A673 (cell line): ENCODE measurements at regions of chr7 and their contacts with region 1.

Region 1: DNA sequence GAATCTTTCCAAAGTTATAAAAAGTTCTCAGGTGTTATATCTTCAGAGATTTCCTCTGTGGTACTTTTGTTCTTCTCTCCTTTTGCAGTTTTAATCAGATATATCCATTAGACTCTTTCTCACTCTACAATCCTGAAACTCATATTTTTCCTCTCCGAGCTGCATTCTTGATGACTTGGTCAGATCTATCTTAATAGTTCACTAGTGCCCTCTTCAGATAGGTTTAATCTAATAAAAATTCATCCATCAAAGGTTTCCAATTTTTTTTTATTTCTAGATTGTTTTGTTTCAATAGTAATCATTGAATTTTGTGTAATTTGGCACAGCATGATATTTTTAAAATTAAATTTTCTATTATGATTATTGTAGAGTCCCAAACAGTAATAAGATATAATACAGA is 21.8 kb upstream of the DGKB start:
- DNase-seq: peak; percentile 14
- H3K4me3 ChIP-seq: no peak overlapping the region
- H3K27ac ChIP-seq: no peak overlapping the region
- H3K4me1 ChIP-seq: no peaks in the 10 kb centered on the region
- H3K27me3 ChIP-seq: peaks cover 4% of the 10 kb centered on the region
- CTCF ChIP-seq: no peak; the same call in 1 of the 2 replicates

Region 2: GRCh38 chr7:14734839-14735321 is 189.5 kb before region 1 on chr7:
- CTCF ChIA-PET with region 1: interaction called, 5 read pairs
- POLR2A ChIA-PET with region 1: no interaction called
- intact Hi-C with region 1: loop called (anchors 5 kb)
- DNase-seq: peak; percentile 62
- H3K4me3 ChIP-seq: no peak overlapping the region
- H3K27ac ChIP-seq: no peak overlapping the region
- H3K4me1 ChIP-seq: no peaks in the 10 kb centered on the region
- H3K27me3 ChIP-seq: no peaks in the 10 kb centered on the region
- CTCF ChIP-seq: peak; percentile 65

Region 3: GRCh38 chr7:15015545-15016326 is 91.3 kb after region 1 on chr7:
- CTCF ChIA-PET with region 1: interaction called, 6 read pairs
- POLR2A ChIA-PET with region 1: no interaction called
- intact Hi-C with region 1: loop called (anchors 5 kb)
- DNase-seq: peak; percentile 75
- H3K4me3 ChIP-seq: no peak overlapping the region
- H3K27ac ChIP-seq: no peak overlapping the region
- H3K4me1 ChIP-seq: no peaks in the 10 kb centered on the region
- H3K27me3 ChIP-seq: no peaks in the 10 kb centered on the region
- CTCF ChIP-seq: peak; percentile 74